MCF 10A (cell line): ENCODE measurements at regions of chr4 and their contacts with region 1.

Region 1: DNA sequence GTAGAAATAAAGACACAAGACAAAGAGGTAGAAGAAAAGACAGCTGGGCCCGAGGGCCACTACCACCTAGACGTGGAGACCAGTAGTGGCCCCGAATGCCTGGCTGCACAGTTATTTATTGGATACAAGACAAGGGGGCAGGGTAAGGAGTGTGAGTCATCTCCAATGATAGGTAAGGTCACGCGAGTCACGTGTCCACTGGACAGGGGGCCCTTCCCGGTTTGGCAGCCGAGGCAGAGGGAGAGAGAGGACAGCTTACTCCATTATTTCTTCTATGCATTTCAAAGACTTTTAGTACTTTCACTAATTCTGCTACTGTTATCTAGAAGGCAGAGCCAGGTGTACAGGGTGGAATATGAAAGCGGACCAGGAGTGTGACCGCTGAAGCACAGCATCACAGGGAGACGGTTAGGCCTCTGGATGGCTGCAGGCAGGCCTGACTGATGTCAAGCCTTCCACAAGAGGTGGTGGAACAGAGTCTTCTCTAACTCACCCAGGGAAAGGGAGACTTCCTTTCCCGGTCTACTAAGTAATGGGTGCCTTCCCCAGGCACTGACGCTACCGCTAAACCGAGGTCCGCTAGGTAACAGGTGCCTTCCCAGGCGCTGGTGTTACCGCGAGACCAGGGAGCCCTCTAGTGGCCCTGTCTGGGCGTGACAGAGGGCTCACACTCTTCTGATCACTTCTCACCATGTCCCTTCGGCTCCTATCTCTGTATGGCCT is 44.9 kb downstream of the ZBTB49 start:
- DNase-seq: peak; percentile 69
- H3K4me3 Mint-ChIP-seq: no peak overlapping the region
- H3K27ac Mint-ChIP-seq: no peak overlapping the region
- H3K4me1 Mint-ChIP-seq: no peaks in the 10 kb centered on the region
- H3K27me3 Mint-ChIP-seq: peaks cover 12% of the 10 kb centered on the region
- CTCF ChIP-seq: peak; percentile 76

Region 2: DNA sequence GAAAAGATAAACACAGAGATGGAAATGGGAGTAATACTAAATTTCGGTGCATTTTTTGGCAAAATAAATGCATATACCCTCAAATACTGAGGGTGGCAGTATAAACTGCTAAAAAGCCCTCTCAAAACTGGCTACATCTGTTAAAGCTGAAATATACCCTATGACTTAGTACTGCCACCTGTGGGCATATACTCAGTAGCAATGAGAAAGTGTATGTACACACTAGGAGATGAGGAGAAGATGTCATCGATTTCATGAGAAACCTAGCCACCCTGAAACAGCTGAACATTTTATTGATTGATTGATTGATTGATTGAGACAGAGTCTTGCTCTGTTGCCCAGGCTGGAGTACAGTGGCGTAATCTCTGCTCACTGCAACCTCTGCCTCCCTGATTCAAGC is 74.7 kb before region 1 on chr4:
- CTCF ChIA-PET with region 1: interaction called, 5 read pairs
- POLR2A ChIA-PET with region 1: no interaction called
- intact Hi-C with region 1: loop called (anchors 1 kb)
- DNase-seq: peak; percentile 67
- H3K4me3 Mint-ChIP-seq: no peak overlapping the region
- H3K27ac Mint-ChIP-seq: no peak overlapping the region
- H3K4me1 Mint-ChIP-seq: no peaks in the 10 kb centered on the region
- H3K27me3 Mint-ChIP-seq: no peaks in the 10 kb centered on the region
- CTCF ChIP-seq: peak; percentile 65

Region 3: GRCh38 chr4:4384837-4385236 is 49.9 kb after region 1 on chr4:
- CTCF ChIA-PET with region 1: no interaction called
- POLR2A ChIA-PET with region 1: no interaction called
- intact Hi-C with region 1: no loop called
- DNase-seq: peak; percentile 68
- H3K4me3 Mint-ChIP-seq: peak overlapping the region; percentile 16
- H3K27ac Mint-ChIP-seq: no peak overlapping the region
- H3K4me1 Mint-ChIP-seq: peaks cover 5% of the 10 kb centered on the region
- H3K27me3 Mint-ChIP-seq: peaks cover 25% of the 10 kb centered on the region
- CTCF ChIP-seq: peak; percentile 28